Heart left ventricle (tissue), 16 donors: ENCODE measurements at regions of chr1 and their contacts with region 1.

Region 1: GRCh38 chr1:200751717-200752116 is 13.0 kb downstream of the CAMSAP2 start:
- DNase-seq: no peak
- ATAC-seq: no peak
- H3K4me3 ChIP-seq: no peak overlapping the region
- H3K27ac ChIP-seq: no peak overlapping the region
- H3K4me1 ChIP-seq: peaks cover 0 to 26% (median 7%) of the 10 kb centered on the region in 12 donors
- H3K27me3 ChIP-seq: no peaks in the 10 kb centered on the region
- CTCF ChIP-seq: no peak
- POLR2A ChIP-seq: no peak

Region 2: DNA sequence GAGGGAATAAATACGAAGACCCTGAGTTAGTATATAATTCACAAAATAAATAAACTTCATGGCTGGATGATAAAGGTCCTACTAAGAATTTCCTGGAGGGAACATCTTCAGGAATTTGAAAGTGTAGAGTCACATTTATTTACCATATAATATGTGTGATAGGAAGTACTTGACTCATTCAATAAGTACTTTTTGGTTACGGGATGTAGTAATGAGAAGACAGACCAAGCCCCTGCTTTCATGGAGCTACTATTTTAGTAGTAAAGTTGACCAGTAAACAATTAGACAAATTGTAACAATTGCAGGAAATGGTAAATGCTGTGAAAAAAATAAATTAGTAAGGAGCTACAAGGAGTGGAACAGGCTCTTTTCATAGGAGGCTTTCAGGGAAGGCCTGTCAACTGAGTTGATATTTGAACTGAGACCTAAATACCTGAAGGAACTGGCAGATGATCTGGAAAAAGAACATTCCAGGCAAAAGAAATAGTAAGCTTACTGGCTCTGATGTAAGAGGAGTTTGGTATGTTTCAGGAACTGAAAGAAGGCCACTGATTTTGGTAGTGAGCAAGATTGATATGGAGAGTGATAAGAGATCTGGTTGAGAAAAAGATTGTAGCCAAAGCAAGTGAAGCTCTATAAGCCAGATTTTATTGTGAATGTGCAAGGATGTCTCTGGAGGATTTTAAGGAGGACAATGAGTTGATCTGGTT is 23.2 kb after region 1 on chr1:
- intact Hi-C with region 1: loop called in 1 of 10 experiments (anchors 1 kb)
- DNase-seq: no peak
- ATAC-seq: peak in 2 of 4 donors; percentile 7 to 32
- H3K4me3 ChIP-seq: no peak overlapping the region
- H3K27ac ChIP-seq: peak overlapping the region in 9 of 12 donors; percentile 1 to 44 (median 32)
- H3K4me1 ChIP-seq: peaks cover 0 to 57% (median 32%) of the 10 kb centered on the region in 12 donors
- H3K27me3 ChIP-seq: no peaks in the 10 kb centered on the region
- CTCF ChIP-seq: no peak
- POLR2A ChIP-seq: no peak

Region 3: DNA sequence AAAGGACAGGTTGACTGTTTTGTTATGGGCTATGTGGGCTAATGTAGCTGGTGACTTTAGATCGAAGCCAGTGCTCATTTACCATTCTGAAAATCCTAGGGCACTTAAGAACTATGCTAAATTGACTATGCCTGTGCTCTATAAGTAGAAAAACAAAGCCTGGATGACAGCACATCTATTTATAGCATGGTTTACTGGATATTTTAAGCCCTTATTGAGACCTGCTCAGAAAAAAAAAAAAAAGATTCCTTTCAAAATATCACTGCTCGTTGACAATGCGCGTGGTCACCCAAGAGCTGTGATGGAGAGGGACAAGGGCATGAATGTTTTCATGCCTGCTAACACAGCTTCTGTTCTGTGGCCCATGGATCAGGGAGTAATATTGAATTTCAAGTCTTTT is 35.1 kb after region 1 on chr1:
- intact Hi-C with region 1: loop called in 2 of 10 experiments (anchors 1 to 5 kb)
- DNase-seq: no peak
- ATAC-seq: peak; percentile 24 to 83 (median 58)
- H3K4me3 ChIP-seq: no peak overlapping the region
- H3K27ac ChIP-seq: peak overlapping the region in 7 of 12 donors; percentile 15 to 45 (median 28)
- H3K4me1 ChIP-seq: peaks cover 0 to 26% (median 3%) of the 10 kb centered on the region in 12 donors
- H3K27me3 ChIP-seq: no peaks in the 10 kb centered on the region
- CTCF ChIP-seq: no peak
- POLR2A ChIP-seq: no peak